ENCODE measurements at regions of chr11 and their contacts with region 1.

Region 1: GRCh38 chr11:1515082-1516060 is 28.8 kb upstream of the MOB2 start:
- DNase-seq: peak; percentile 85 to 91
- H3K4me3 ChIP-seq: peak overlapping the region in 2 of 4 donors; percentile 7 to 13
- H3K27ac ChIP-seq: no peak overlapping the region
- H3K4me1 ChIP-seq: peaks cover 22 to 75% (median 46%) of the 10 kb centered on the region in 4 donors
- H3K27me3 ChIP-seq: no peaks in the 10 kb centered on the region
- CTCF ChIP-seq: peak in 5 of 7 experiments; percentile 87 to 93 (median 92)
- EP300 ChIP-seq: no peak
- POLR2A ChIP-seq: no peak

Region 2: DNA sequence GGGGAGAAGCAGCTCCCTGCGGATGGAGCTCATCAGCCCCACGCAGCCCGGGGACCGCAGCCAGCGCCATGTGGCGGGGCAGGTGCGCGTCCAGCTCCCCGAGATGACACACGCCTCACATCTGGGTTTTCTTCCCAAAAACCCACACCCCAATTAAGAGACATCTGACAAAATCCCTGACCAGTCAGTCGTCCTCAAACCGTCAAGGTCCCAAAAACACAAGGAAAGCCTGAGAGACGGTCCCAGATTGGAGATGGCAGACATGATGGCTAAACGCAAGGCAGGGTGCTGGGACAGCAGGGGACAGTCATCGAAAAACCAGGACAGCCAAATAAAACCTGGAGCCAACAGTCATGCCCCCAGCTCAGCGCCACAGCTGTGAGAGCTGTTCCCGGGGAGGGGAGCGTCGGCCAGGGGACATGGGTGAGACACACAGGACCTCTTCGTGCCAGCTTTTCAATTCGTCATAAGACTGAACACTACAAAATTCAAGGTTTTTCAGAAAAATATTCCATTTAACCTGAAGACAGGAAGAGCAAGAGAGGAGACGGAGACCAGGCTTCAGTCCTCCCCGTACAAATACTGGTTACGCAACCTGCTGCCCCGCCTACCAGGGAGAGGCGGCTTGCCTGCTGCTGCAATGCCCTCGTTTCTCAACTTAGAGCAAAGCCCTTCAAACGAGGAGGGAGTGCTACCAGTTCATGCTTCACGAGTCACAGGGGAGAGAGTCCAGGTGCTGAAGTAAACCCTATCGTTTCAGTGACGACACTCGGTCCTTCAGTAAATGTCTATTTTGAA is 216.5 kb before region 1 on chr11:
- intact Hi-C with region 1: loop called (anchors 10 kb)
- DNase-seq: peak; percentile 85 to 92
- H3K4me3 ChIP-seq: no peak overlapping the region
- H3K27ac ChIP-seq: peak overlapping the region; percentile 25 to 96 (median 51)
- H3K4me1 ChIP-seq: peaks cover 56 to 72% (median 66%) of the 10 kb centered on the region in 4 donors
- H3K27me3 ChIP-seq: no peaks in the 10 kb centered on the region
- CTCF ChIP-seq: no peak
- EP300 ChIP-seq: no peak
- POLR2A ChIP-seq: no peak